K562 (cell line): ENCODE measurements at regions of chr7 and their contacts with region 1.

Region 1: GRCh38 chr7:5854738-5855137 is 25.9 kb upstream of the OCM start:
- DNase-seq: no peak
- ATAC-seq: no peak
- H3K4me3 ChIP-seq: no peak overlapping the region
- H3K27ac ChIP-seq: no peak overlapping the region
- H3K4me1 ChIP-seq: no peaks in the 10 kb centered on the region; a peak in 2 of 5 replicates
- H3K27me3 ChIP-seq: peaks cover 4 to 10% of the 10 kb centered on the region in 2 experiments; a peak in 1 of 5 replicates
- CTCF ChIP-seq: no peak
- EP300 ChIP-seq: no peak
- POLR2A ChIP-seq: no peak
- RAD21 ChIP-seq: no peak

Region 2: DNA sequence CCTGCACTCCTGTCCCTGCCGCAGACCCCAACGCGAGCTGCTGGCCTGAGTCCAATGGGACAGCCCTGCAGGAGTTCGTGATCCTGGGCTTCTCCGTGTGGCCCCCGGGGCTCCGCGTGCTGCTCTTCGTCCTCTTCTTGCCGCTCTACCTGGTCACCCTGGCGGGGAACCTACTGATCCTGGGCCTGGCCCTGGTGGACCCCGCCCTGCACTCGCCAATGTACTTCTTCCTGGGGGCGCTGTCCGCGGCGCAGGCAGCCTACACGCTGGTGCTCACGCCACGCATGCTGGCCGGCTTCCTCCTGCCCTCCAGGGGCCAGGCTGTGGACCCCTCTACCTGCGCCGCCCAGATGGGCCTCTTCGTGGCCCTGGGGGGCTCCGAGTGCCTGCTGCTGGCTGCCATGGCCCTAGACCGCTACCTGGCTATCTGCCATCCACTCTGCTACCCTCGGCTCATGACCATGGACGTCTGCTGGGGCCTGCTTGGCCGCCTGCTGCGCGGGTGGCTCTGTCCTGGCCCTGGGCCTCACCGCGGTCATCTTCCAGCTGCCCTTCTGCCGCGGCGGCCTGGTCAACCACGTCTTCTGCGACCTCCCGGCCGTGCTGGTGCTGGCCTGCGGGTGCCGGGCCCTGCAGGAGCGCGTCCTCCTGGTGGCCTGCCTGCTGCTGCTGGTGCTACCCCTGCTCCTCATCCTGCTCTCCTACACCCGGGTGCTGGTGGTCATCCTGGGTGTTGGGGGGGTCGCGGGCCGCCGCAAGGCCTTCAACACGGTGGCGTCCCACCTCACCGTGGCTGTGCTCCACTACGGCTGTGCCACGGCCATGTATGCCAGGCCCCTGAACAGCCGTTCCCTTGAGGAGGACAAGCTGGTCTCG is 737.4 kb before region 1 on chr7:
- CTCF ChIA-PET with region 1: no interaction called
- POLR2A ChIA-PET with region 1: no interaction called
- in situ Hi-C with region 1: loop called (anchors 5 kb)
- intact Hi-C with region 1: no loop called
- DNase-seq: peak in 1 of 4 experiments; percentile 12
- ATAC-seq: peak; percentile 56
- H3K4me3 ChIP-seq: no peak overlapping the region
- H3K27ac ChIP-seq: no peak overlapping the region
- H3K4me1 ChIP-seq: peaks cover 0 to 12% of the 10 kb centered on the region in 2 experiments; a peak in 2 of 5 replicates
- H3K27me3 ChIP-seq: peaks cover 33 to 62% of the 10 kb centered on the region in 2 experiments
- CTCF ChIP-seq: no peak
- EP300 ChIP-seq: no peak
- POLR2A ChIP-seq: no peak
- RAD21 ChIP-seq: no peak

Region 3: GRCh38 chr7:6323967-6324701 is 469.4 kb after region 1 on chr7:
- CTCF ChIA-PET with region 1: interaction called, 3 read pairs
- POLR2A ChIA-PET with region 1: no interaction called
- in situ Hi-C with region 1: no loop called
- intact Hi-C with region 1: loop called (anchors 1 kb)
- DNase-seq: no peak
- ATAC-seq: no peak
- H3K4me3 ChIP-seq: no peak overlapping the region
- H3K27ac ChIP-seq: no peak overlapping the region
- H3K4me1 ChIP-seq: no peaks in the 10 kb centered on the region; a peak in 1 of 5 replicates
- H3K27me3 ChIP-seq: no peaks in the 10 kb centered on the region
- CTCF ChIP-seq: no peak
- EP300 ChIP-seq: no peak
- POLR2A ChIP-seq: no peak
- RAD21 ChIP-seq: no peak

Region 4: DNA sequence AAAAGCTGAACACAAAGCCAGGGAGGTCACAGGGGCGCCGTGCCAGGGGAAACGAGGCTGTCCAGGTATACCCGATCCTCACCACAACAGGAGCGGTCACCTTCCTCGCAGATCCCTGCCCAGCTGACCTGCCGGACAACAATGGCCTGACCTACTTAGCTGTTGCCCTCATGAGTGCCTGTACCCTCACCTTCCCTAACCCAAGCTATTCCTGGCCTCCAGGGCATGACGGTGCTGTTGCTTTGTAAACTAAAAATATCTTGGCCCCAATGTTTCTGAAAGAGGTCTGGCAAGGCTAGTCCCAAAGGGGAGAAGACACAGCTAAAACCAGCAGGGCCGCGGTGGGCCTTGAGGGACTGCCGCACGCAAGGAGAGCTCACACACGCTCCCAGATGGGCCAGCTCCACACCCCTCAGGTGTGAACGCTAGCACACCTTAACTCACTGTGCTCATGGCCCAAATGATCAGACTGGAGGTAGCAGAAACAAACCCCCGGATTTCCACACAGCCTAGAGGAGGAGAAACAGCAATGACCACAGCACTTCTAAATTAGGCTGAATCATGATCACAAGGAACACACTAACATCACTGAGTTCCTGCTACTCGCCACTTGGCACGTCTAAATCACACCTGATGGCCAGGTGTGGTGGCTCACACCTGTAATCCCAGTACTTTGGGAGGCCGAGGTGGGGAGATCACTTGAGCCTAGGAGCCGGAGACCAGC is 484.0 kb after region 1 on chr7:
- CTCF ChIA-PET with region 1: no interaction called
- POLR2A ChIA-PET with region 1: no interaction called
- in situ Hi-C with region 1: loop called (anchors 10 kb)
- intact Hi-C with region 1: no loop called
- DNase-seq: no peak
- ATAC-seq: no peak
- H3K4me3 ChIP-seq: no peak overlapping the region
- H3K27ac ChIP-seq: no peak overlapping the region
- H3K4me1 ChIP-seq: peaks cover 0 to 3% of the 10 kb centered on the region in 2 experiments; a peak in 1 of 5 replicates
- H3K27me3 ChIP-seq: no peaks in the 10 kb centered on the region
- CTCF ChIP-seq: no peak
- EP300 ChIP-seq: no peak
- POLR2A ChIP-seq: no peak
- RAD21 ChIP-seq: no peak

Region 5: DNA sequence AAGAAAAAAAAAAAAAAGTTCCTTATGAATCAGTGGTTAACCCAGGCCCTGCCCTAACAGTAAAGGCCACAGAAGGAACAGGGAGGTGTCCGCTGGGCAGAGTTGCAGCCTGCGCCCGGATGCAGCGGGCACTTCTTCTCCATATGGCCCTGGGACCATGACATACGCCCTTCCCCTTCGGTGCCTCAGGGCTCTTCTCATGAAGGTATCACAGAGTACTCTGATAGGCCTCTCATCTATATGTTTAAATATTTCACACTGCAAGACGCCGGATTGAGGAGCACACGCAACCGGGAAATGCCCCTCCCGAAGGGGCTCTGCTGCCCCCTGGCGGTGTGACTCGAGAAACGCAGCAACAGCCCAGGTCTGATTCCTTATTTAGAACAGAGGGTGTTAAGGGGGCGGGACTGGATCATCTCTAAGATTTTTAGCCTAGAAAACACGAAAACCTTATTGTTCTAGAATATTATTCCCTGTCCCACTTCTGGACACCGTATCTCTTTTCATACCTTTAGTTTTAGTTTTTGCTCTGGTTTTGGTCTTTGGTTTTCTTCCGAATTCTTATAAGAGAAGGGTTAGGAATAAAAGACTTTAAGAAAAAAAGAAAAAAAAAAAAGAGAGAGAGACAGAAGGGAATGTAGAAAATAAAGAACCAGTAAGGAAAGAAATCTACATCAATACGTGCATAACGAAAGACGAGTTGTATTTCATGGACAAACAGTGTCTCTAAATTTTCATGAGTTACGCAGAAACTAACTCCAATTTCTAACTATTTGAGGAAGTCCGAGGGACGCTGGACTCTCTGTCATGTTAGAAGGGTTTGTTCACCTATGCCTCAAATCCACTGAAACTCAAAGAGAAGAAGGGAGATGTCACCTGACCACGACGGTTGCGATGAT is 581.0 kb after region 1 on chr7:
- CTCF ChIA-PET with region 1: no interaction called
- POLR2A ChIA-PET with region 1: no interaction called
- in situ Hi-C with region 1: no loop called
- intact Hi-C with region 1: loop called (anchors 10 kb)
- DNase-seq: peak; percentile 83 to 93 (median 86)
- ATAC-seq: peak; percentile 99
- H3K4me3 ChIP-seq: no peak overlapping the region
- H3K27ac ChIP-seq: no peak overlapping the region
- H3K4me1 ChIP-seq: peaks cover 3 to 5% of the 10 kb centered on the region in 2 experiments; a peak in 2 of 5 replicates
- H3K27me3 ChIP-seq: no peaks in the 10 kb centered on the region
- CTCF ChIP-seq: peak; percentile 89 to 96 (median 96)
- EP300 ChIP-seq: no peak
- POLR2A ChIP-seq: no peak
- RAD21 ChIP-seq: peak; percentile 87 to 88

Region 6: GRCh38 chr7:6516387-6516983 is 661.7 kb after region 1 on chr7:
- CTCF ChIA-PET with region 1: no interaction called
- POLR2A ChIA-PET with region 1: no interaction called
- in situ Hi-C with region 1: loop called (anchors 5 kb)
- intact Hi-C with region 1: no loop called
- DNase-seq: peak; percentile 56 to 86 (median 60)
- ATAC-seq: peak; percentile 84
- H3K4me3 ChIP-seq: no peak overlapping the region
- H3K27ac ChIP-seq: no peak overlapping the region
- H3K4me1 ChIP-seq: peaks cover 0 to 6% of the 10 kb centered on the region in 2 experiments; a peak in 2 of 5 replicates
- H3K27me3 ChIP-seq: peaks cover 4 to 48% of the 10 kb centered on the region in 2 experiments; a peak in 4 of 5 replicates
- CTCF ChIP-seq: peak; percentile 83 to 90 (median 87)
- EP300 ChIP-seq: no peak
- POLR2A ChIP-seq: no peak
- RAD21 ChIP-seq: peak; percentile 80 to 90